HCT116 (cell line): ENCODE measurements at regions of chr12 and their contacts with region 1.

Region 1: GRCh38 chr12:1093166-1093751 is 102.2 kb downstream of the ERC1 start:
- DNase-seq: peak; percentile 53
- ATAC-seq: peak; percentile 85
- H3K4me3 ChIP-seq: no peak overlapping the region
- H3K27ac ChIP-seq: no peak overlapping the region
- H3K4me1 ChIP-seq: no peaks in the 10 kb centered on the region
- H3K27me3 ChIP-seq: no peaks in the 10 kb centered on the region
- CTCF ChIP-seq: peak; percentile 53 to 76 (median 74); a peak in 5 of 6 replicates
- POLR2A ChIP-seq: no peak
- RAD21 ChIP-seq: peak; percentile 73

Region 2: DNA sequence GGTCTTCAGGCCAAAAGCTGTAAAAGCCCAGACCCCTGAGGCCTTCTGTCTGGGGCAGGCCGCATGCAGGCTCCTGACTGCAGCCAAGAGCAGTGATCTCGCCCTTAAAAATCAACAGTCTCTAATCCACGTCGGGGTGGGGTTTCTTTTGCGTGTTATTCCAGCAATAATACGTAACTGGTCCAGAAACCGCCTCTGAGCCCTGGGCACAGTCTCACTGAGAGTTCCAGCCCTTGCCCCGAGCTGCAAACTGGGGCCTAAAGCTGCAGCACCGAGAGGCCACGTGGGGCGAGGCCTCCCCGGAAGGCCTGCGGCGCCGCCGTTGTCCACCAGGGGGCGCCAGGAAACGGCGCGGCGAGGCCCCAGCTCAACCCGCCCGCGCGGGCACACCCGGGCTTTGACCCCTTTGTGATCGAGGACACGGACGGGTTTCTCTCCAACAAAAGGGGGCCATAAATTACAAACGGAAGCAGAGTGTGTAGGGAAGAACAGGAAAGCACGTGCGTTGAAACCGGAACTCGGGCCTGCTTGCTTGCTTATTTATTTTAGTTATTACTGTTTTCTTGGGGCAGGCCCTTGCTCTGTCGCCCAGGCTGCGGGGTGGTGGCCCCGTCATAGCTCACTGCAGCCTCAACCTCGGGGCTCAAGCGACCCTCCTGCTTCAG is 517.2 kb before region 1 on chr12:
- CTCF ChIA-PET with region 1: interaction called, 23 read pairs
- POLR2A ChIA-PET with region 1: no interaction called
- RAD21 ChIA-PET with region 1: interaction called in 1 of 2 experiments, 3 read pairs
- intact Hi-C with region 1: loop called (anchors 5 kb)
- DNase-seq: peak; percentile 41
- ATAC-seq: peak; percentile 72
- H3K4me3 ChIP-seq: no peak overlapping the region
- H3K27ac ChIP-seq: peak overlapping the region; percentile 31
- H3K4me1 ChIP-seq: peaks cover 33 to 52% of the 10 kb centered on the region in 2 experiments
- H3K27me3 ChIP-seq: no peaks in the 10 kb centered on the region
- CTCF ChIP-seq: peak in 2 of 3 experiments; percentile 94 to 98; a peak in 4 of 6 replicates
- POLR2A ChIP-seq: no peak
- RAD21 ChIP-seq: no peak

Region 3: GRCh38 chr12:810671-811415 is 282.4 kb before region 1 on chr12:
- CTCF ChIA-PET with region 1: interaction called, 12 read pairs
- POLR2A ChIA-PET with region 1: no interaction called
- RAD21 ChIA-PET with region 1: no interaction called
- intact Hi-C with region 1: loop called (anchors 5 kb)
- DNase-seq: no peak
- ATAC-seq: no peak
- H3K4me3 ChIP-seq: no peak overlapping the region
- H3K27ac ChIP-seq: no peak overlapping the region
- H3K4me1 ChIP-seq: no peaks in the 10 kb centered on the region
- H3K27me3 ChIP-seq: no peaks in the 10 kb centered on the region
- CTCF ChIP-seq: no peak
- POLR2A ChIP-seq: no peak
- RAD21 ChIP-seq: no peak

Region 4: GRCh38 chr12:818733-819132 is 274.5 kb before region 1 on chr12:
- CTCF ChIA-PET with region 1: interaction called, 12 read pairs
- POLR2A ChIA-PET with region 1: no interaction called
- RAD21 ChIA-PET with region 1: no interaction called
- intact Hi-C with region 1: loop called (anchors 5 kb)
- DNase-seq: no peak
- ATAC-seq: no peak
- H3K4me3 ChIP-seq: no peak overlapping the region
- H3K27ac ChIP-seq: no peak overlapping the region
- H3K4me1 ChIP-seq: peaks cover 4 to 11% of the 10 kb centered on the region in 2 experiments; a peak in 3 of 4 replicates
- H3K27me3 ChIP-seq: no peaks in the 10 kb centered on the region
- CTCF ChIP-seq: peak in 1 of 3 experiments; percentile 29; a peak in 1 of 6 replicates
- POLR2A ChIP-seq: no peak
- RAD21 ChIP-seq: no peak

Region 5: DNA sequence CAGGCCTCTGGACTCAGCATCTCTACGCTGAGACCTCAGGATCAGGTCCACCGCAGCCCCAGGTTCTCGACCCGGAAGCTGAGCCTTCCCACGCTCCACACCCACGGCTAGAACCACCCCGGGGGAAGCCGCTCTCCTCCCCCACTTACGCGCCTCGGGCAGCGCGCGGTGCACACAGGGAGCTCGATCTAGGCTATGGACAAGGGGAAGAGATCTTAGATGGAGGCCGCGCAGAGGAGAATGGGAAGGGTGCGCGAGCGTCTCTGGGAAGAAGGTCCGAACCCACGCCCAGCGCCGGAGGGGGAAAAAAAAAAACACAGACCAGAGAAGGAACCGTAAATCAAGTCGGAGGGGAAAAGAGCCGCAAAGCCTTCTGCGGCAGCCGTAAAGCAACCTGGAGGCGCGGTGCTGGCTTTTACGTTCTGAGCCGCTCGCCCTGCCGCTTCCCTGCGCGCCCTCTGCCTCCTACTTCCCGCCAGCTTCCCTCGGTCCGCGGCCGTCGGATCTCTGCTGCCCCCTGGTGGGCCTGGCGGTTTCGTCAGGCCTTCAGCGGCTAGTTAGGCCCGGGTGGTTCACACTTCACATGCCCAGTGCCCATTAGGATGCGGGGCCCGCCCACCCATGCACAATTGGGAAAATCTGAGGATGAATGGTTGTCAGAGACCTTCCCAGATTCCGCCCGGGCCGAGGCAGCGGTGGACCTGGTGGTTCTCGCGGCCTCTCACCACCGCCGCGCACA is 143.6 kb before region 1 on chr12 and contains the start of gene RAD52:
- CTCF ChIA-PET with region 1: interaction called, 12 read pairs
- POLR2A ChIA-PET with region 1: interaction called, 4 read pairs
- RAD21 ChIA-PET with region 1: interaction called, 6 to 8 read pairs
- intact Hi-C with region 1: no loop called
- DNase-seq: peak; percentile 97
- ATAC-seq: peak; percentile 93
- H3K4me3 ChIP-seq: peak within 1 kb of the TSS; percentile 57 to 94
- H3K27ac ChIP-seq: peak within 1 kb of the TSS; percentile 86
- H3K4me1 ChIP-seq: peaks cover 5 to 14% of the 10 kb centered on the region in 2 experiments
- H3K27me3 ChIP-seq: no peaks in the 10 kb centered on the region
- CTCF ChIP-seq: peak; percentile 92 to 98 (median 95)
- POLR2A ChIP-seq: peak; percentile 91
- RAD21 ChIP-seq: peak; percentile 90
- total RNA-seq, gene RAD52: 24.4 TPM

Region 6: DNA sequence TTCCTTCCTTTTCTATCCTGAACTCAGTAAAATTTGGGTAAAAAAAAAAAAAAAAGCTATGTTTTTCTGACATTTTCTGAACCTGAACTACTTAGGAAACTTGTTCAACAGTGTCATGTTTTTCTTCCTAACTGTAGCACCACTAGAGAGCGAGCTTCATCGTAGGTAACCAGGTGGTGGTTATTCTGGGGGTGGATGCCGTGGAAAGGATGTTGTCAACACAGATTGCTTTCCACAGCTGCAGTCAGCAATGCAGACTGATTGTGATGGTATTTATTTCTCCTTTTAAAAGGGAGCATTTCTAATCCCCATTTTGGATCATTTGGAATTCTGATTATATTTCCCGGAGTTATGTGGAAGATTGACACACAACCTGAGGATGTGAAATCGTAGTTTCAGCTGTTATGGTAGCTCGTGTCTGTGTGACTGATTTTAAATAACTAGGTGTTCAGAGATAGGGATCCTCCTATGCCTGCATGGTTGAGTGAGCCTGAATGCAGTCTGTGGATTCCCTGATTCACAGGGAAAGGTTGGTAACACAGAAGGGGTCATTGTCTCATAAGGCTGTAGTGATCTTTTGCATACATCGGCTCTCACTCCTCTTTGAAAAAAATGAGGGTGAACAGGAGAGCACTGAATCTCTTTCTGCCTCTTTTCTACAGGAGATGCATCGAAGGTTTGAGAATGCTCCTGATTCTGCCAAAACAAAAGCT is 11.0 kb after region 1 on chr12:
- CTCF ChIA-PET with region 1: interaction called, 15 read pairs
- POLR2A ChIA-PET with region 1: no interaction called
- RAD21 ChIA-PET with region 1: no interaction called
- intact Hi-C with region 1: no loop called
- DNase-seq: no peak
- ATAC-seq: no peak
- H3K4me3 ChIP-seq: no peak overlapping the region
- H3K27ac ChIP-seq: no peak overlapping the region
- H3K4me1 ChIP-seq: peaks cover 6 to 12% of the 10 kb centered on the region in 2 experiments; a peak in 3 of 4 replicates
- H3K27me3 ChIP-seq: no peaks in the 10 kb centered on the region
- CTCF ChIP-seq: no peak
- POLR2A ChIP-seq: no peak
- RAD21 ChIP-seq: no peak